H1 (cell line): ENCODE measurements at regions of chr7 and their contacts with region 1.

Region 1: DNA sequence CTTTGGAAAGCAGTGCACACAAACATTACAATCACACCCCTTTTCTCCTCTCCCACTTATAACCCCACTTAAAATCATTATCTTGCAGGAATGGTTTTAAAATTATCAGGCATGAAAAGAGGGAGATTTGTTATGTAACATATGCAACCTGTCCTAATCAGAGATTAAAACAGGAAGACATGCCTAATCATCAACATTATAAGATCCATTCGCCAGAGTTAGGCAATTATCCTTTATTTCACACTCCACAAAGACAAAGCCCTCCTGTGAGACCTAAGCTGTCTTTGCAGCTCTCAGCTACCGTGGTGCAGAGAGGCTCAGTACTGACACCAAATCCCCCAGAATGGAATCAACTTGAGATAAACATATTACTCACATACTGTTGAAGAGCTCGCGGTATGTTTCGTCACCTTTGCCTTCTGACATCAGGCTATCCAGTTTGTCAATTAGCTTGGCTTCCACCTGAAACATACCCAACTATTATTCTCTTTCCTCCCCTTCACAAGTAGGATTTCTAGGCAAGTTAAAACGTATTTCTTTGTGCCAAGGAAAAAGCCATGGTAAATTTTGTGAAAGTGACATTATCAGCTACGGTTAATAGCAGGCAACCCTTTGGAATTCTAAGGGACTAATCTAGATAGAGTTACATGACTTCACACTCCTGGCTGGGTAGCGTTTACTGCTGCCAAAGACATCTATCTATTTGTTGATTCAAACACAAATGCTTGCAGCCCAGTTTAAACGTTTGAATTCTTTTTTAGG is 226.2 kb upstream of the IMMP2L start:
- DNase-seq: no peak
- H3K4me3 ChIP-seq: no peak overlapping the region
- H3K27ac ChIP-seq: no peak overlapping the region
- H3K4me1 ChIP-seq: peaks cover 0 to 10% (median 3%) of the 10 kb centered on the region in 4 experiments; a peak in 5 of 7 replicates
- H3K27me3 ChIP-seq: no peaks in the 10 kb centered on the region
- CTCF ChIP-seq: no peak
- EP300 ChIP-seq: no peak
- POLR2A ChIP-seq: no peak
- RAD21 ChIP-seq: no peak

Region 2: DNA sequence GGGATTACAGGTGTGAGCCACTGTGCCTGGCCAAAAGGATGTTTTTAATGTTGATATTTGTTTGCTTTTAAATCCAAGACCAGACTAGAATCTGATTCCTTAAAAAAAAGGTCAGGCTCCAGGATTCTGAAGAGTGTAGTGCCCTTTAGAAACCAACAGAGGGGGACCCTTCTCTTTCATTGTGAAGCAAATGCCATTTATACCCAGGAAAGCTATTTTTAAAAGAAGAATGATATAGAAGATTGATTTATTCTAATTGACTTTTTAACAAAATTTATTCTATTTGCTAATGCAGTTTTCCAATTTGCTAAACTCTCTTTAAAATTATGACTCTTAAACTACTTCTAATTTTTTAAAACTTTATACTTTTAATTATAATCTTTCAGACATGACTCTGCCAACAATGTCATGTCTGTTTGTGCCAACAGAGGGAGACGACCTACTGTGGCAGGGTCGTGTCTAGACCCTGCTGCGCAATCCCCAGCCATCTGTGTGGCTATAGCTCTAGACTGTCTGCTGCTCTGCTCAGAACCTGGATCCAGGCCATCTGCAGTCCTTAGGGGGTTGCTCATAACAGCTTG is 25.2 kb before region 1 on chr7:
- CTCF ChIA-PET with region 1: interaction called, 11 read pairs
- POLR2A ChIA-PET with region 1: no interaction called
- DNase-seq: no peak
- H3K4me3 ChIP-seq: no peak overlapping the region
- H3K27ac ChIP-seq: no peak overlapping the region
- H3K4me1 ChIP-seq: no peaks in the 10 kb centered on the region; a peak in 1 of 7 replicates
- H3K27me3 ChIP-seq: peaks cover 0 to 2% (median 0%) of the 10 kb centered on the region in 4 experiments; a peak in 1 of 7 replicates
- CTCF ChIP-seq: peak; percentile 44 to 62 (median 58)
- EP300 ChIP-seq: no peak
- POLR2A ChIP-seq: no peak
- RAD21 ChIP-seq: peak; percentile 63 to 66